Activated CD4-positive, alpha-beta memory T cell treated with anti-CD3 and anti-CD28 coated beads, Interleukin-2, amount 10 ng/mL, durations not matched to agents 7 days and 5 days (primary cell): ENCODE measurements at regions of chr10 and their contacts with region 1.

Region 1: GRCh38 chr10:91220194-91220953 is at the start of gene PCGF5:
- DNase-seq: peak; percentile 93
- H3K4me3 Mint-ChIP-seq: peak within 1 kb of the TSS; percentile 88
- H3K27ac Mint-ChIP-seq: peak within 1 kb of the TSS; percentile 76
- H3K4me1 Mint-ChIP-seq: peaks cover 42% of the 10 kb centered on the region
- H3K27me3 Mint-ChIP-seq: no peaks in the 10 kb centered on the region
- total RNA-seq, gene PCGF5: 44.7 to 45.9 TPM

Region 2: GRCh38 chr10:91198781-91199180 is 21.6 kb before region 1 on chr10:
- CTCF ChIA-PET with region 1: interaction called, 4 read pairs
- POLR2A ChIA-PET with region 1: interaction called, 16 read pairs
- DNase-seq: no peak
- H3K4me3 Mint-ChIP-seq: peak overlapping the region; percentile 3
- H3K27ac Mint-ChIP-seq: peak overlapping the region; percentile 74
- H3K4me1 Mint-ChIP-seq: peaks cover 69% of the 10 kb centered on the region
- H3K27me3 Mint-ChIP-seq: no peaks in the 10 kb centered on the region

Region 3: DNA sequence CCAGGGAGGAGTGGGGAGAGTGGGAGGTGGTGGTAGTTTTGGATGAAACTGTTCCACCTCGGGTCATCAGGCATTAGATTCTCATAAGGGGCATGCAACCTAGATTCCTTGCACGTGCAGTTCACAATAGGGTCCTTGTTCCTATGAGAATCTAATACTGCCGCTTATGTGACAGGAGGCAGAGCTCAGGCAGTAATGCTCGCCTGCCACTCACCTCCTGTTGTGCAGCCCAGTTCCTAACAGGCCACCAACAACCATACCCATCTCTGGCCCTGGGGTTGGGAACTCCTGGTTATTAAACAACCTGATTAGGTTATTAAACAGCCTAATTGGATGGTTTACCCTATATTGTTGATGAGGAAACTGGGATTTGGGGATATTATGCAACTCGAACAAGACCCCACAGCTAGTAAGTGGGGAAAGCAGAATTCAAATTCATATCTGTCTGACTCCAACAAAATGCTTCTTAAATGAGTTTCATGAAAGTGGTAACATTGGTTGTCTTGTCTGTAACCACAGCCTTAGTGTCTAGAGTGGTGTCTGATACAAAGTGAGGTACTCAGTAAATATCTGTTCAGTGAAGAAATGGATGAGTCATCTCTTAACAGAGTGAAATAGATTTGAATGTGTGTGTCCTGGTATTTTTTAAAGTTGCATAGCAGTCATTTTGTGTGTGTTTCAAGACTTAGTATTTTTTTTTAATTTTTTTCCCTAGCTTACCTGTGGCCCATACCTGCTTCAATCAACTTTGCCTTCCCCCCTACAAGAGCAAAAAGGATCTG is 291.4 kb after region 1 on chr10:
- CTCF ChIA-PET with region 1: no interaction called
- POLR2A ChIA-PET with region 1: no interaction called
- DNase-seq: no peak
- H3K4me3 Mint-ChIP-seq: no peak overlapping the region
- H3K27ac Mint-ChIP-seq: no peak overlapping the region
- H3K4me1 Mint-ChIP-seq: peaks cover 3% of the 10 kb centered on the region
- H3K27me3 Mint-ChIP-seq: no peaks in the 10 kb centered on the region

Region 4: DNA sequence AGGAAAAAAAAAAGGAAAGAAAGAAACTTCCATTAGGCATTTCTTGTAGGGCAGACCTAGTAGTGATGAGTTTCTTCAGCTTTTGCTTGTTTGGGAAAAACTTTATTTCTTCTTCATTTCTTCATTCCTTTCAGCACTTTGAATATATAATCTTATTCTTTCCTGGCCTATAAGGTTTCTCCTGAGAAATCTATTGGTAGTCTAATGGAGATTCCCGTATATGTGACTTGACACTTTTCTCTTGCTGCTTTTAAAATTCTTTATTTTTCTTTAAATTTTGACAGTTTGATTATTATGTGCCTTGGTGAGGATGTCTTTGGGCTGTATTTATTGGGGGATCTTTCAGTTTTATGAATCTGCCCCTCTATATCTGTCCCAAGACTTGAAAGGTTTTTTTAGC is 699.3 kb after region 1 on chr10:
- CTCF ChIA-PET with region 1: no interaction called
- POLR2A ChIA-PET with region 1: no interaction called
- DNase-seq: no peak
- H3K4me3 Mint-ChIP-seq: no peak overlapping the region
- H3K27ac Mint-ChIP-seq: no peak overlapping the region
- H3K4me1 Mint-ChIP-seq: peaks cover 20% of the 10 kb centered on the region
- H3K27me3 Mint-ChIP-seq: peaks cover 29% of the 10 kb centered on the region